ENCODE measurements at regions of chr17 and their contacts with region 1.

Region 1: GRCh38 chr17:4074831-4075495 is 67.9 kb downstream of the ZZEF1 start:
- DNase-seq: peak in 4 of 5 donors; percentile 45 to 53 (median 48)
- H3K4me3 ChIP-seq: no peak overlapping the region
- H3K4me3 Mint-ChIP-seq: no peak overlapping the region
- H3K27ac ChIP-seq: no peak overlapping the region
- H3K27ac Mint-ChIP-seq: peak overlapping the region in 4 of 7 donors; percentile 27 to 82 (median 50)
- H3K4me1 ChIP-seq: no peaks in the 10 kb centered on the region
- H3K4me1 Mint-ChIP-seq: peaks cover 0 to 6% (median 3%) of the 10 kb centered on the region in 4 donors
- H3K27me3 ChIP-seq: no peaks in the 10 kb centered on the region
- H3K27me3 Mint-ChIP-seq: no peaks in the 10 kb centered on the region

Region 2: GRCh38 chr17:3859940-3860339 is 215.0 kb before region 1 on chr17:
- CTCF ChIA-PET with region 1: interaction called, 22 read pairs
- POLR2A ChIA-PET with region 1: no interaction called
- intact Hi-C with region 1: loop called (anchors 2 kb)
- DNase-seq: no peak
- H3K4me3 ChIP-seq: no peak overlapping the region
- H3K4me3 Mint-ChIP-seq: no peak overlapping the region
- H3K27ac ChIP-seq: no peak overlapping the region
- H3K27ac Mint-ChIP-seq: no peak overlapping the region
- H3K4me1 ChIP-seq: no peaks in the 10 kb centered on the region
- H3K4me1 Mint-ChIP-seq: no peaks in the 10 kb centered on the region
- H3K27me3 ChIP-seq: no peaks in the 10 kb centered on the region
- H3K27me3 Mint-ChIP-seq: no peaks in the 10 kb centered on the region

Region 3: GRCh38 chr17:3865176-3865575 is 209.8 kb before region 1 on chr17:
- CTCF ChIA-PET with region 1: interaction called, 22 read pairs
- POLR2A ChIA-PET with region 1: no interaction called
- intact Hi-C with region 1: loop called (anchors 2 kb)
- DNase-seq: no peak
- H3K4me3 ChIP-seq: no peak overlapping the region
- H3K4me3 Mint-ChIP-seq: no peak overlapping the region
- H3K27ac ChIP-seq: no peak overlapping the region
- H3K27ac Mint-ChIP-seq: no peak overlapping the region
- H3K4me1 ChIP-seq: no peaks in the 10 kb centered on the region
- H3K4me1 Mint-ChIP-seq: no peaks in the 10 kb centered on the region
- H3K27me3 ChIP-seq: no peaks in the 10 kb centered on the region
- H3K27me3 Mint-ChIP-seq: no peaks in the 10 kb centered on the region